CD4-positive, alpha-beta T cell (primary cell): ENCODE measurements at regions of chr5 and their contacts with region 1.

Region 1: DNA sequence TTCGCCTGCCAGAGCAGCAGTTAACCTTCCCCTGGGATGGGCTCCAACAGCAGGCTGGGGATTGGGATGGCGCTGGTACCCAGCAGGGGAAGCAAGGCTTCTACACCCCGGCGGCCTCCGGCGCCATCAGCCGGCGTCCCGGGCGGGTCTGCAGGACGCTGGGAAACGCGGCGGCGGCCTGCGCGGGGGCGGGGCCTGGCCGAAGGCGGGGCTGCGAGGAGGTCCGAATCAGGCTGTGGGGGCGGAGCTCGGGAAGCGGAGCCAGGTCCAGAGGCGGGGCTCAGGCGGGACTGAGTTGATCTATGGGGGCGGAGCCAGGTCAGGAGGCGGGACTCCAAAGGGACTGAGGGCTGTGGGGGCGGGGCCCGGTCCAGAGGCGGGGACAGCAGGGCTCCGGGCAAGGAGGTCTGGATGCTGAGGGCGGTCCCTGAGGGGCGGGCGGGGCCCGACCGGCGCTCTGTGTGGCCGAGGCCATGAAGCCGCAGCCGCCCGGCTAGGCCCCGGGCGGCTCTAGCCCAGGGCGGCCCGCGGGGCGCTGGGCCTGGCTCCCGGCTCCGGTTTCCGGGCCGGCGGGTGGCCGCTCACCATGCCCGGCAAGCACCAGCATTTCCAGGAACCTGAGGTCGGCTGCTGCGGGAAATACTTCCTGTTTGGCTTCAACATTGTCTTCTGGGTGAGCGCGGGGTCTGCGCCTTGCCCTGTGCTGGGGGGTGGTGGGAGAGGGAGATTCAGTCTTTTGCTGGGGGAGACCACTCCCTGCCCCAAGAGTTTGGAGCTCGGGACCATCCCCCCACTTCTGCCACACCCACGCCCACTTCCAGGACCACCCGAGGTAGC is at the start of gene TSPAN17:
- DNase-seq: peak; percentile 91 to 100 (median 98)
- ATAC-seq: peak; percentile 90
- H3K4me3 ChIP-seq: peak within 1 kb of the TSS; percentile 71
- H3K4me3 Mint-ChIP-seq: peak within 1 kb of the TSS; percentile 93
- H3K27ac ChIP-seq: peak within 1 kb of the TSS; percentile 65 to 70
- H3K27ac Mint-ChIP-seq: peak within 1 kb of the TSS; percentile 76
- H3K4me1 ChIP-seq: peaks cover 52% of the 10 kb centered on the region
- H3K4me1 Mint-ChIP-seq: peaks cover 58% of the 10 kb centered on the region
- H3K27me3 ChIP-seq: no peaks in the 10 kb centered on the region
- H3K27me3 Mint-ChIP-seq: no peaks in the 10 kb centered on the region
- CTCF ChIP-seq: no peak
- total RNA-seq, gene TSPAN17: 7.8 to 7.9 TPM

Region 2: DNA sequence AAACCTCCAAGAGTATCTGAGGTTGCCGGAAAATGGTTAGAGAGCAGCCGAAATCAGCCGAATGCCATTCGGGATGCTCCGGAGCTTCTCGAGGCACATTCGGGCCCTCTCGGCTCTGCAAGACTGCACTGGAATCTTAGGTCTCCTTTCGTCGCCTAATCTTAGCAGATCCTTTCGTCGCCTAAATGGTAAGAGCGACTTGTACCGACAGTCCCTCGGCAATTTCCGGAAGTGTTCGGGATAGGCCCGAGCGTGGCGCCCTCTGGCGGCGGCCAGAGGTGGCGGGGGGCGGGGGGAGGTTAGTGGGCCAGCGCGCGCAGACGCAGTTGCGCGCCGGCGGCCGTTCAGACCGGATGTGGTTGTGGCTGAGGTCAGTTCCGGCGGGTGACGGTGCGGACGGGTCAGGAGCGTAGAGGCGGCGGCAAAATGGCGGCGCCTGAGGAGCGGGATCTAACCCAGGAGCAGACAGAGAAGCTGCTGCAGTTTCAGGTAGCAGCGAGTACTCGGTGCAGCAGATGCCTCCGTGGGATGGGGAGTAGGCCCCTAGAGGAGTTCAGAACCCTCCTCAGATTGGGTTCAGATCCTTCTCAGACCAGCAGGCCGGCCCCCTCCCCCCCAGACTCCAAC is 199.2 kb before region 1 on chr5 and contains the start of gene FAF2:
- CTCF ChIA-PET with region 1: interaction called, 5 read pairs
- POLR2A ChIA-PET with region 1: no interaction called
- intact Hi-C with region 1: loop called in 1 of 2 experiments (anchors 5 kb)
- DNase-seq: peak; percentile 94 to 100 (median 98)
- ATAC-seq: peak; percentile 96
- H3K4me3 ChIP-seq: peak within 1 kb of the TSS; percentile 96
- H3K4me3 Mint-ChIP-seq: peak within 1 kb of the TSS; percentile 99
- H3K27ac ChIP-seq: peak within 1 kb of the TSS; percentile 81 to 96
- H3K27ac Mint-ChIP-seq: peak within 1 kb of the TSS; percentile 99
- H3K4me1 ChIP-seq: peaks cover 30% of the 10 kb centered on the region
- H3K4me1 Mint-ChIP-seq: peaks cover 49% of the 10 kb centered on the region
- H3K27me3 ChIP-seq: no peaks in the 10 kb centered on the region
- H3K27me3 Mint-ChIP-seq: no peaks in the 10 kb centered on the region
- CTCF ChIP-seq: peak; percentile 88
- total RNA-seq, gene FAF2: 27.5 to 30.1 TPM

Region 3: GRCh38 chr5:176612008-176612407 is 35.2 kb before region 1 on chr5:
- CTCF ChIA-PET with region 1: interaction called, 5 read pairs
- POLR2A ChIA-PET with region 1: no interaction called
- intact Hi-C with region 1: loop called in 1 of 2 experiments (anchors 2 kb)
- DNase-seq: no peak
- ATAC-seq: no peak
- H3K4me3 ChIP-seq: no peak overlapping the region
- H3K4me3 Mint-ChIP-seq: peak overlapping the region; percentile 26
- H3K27ac ChIP-seq: no peak overlapping the region
- H3K27ac Mint-ChIP-seq: no peak overlapping the region
- H3K4me1 ChIP-seq: peaks cover 15% of the 10 kb centered on the region
- H3K4me1 Mint-ChIP-seq: peaks cover 11% of the 10 kb centered on the region
- H3K27me3 ChIP-seq: peaks cover 18 to 23% of the 10 kb centered on the region in 2 experiments
- H3K27me3 Mint-ChIP-seq: peaks cover 66% of the 10 kb centered on the region
- CTCF ChIP-seq: no peak

Region 4: DNA sequence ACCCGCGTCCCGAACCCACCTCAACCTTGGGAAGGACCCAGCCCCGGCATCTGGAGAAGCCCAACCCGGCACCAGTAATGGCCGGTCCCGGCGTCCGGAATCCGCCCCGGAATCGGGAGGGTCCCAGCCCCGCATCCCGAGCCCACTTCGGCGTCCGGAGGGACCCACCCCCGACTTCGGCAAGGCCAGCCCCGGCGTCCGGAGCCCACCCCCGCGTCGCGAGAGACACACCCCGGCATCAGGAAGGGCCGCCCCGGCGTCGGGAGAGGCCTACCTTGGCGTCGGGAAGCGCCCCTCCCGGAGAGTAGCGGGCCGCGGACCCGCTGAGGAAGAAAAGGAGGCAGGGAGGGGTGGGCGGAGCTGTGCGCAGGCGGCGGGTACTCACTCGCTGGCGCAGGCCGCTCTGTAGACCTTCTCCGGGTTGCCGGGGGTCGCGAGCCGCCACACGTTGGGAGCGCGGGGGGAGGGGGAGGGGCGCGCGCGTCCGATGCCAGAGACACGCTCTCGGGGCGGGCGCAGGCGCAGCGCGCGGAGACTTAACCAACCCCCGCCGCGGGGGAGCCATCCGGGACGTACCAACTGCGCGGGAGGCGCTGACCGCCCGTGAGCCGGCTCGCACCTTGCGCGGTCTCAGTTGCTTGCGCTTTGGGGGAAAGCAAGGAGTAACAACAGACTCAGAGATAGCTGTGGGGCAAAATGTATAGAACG is 359.2 kb after region 1 on chr5 and contains the start of gene UIMC1:
- CTCF ChIA-PET with region 1: no interaction called
- POLR2A ChIA-PET with region 1: no interaction called
- intact Hi-C with region 1: loop called in 1 of 2 experiments (anchors 5 kb)
- DNase-seq: peak; percentile 84 to 96 (median 89)
- ATAC-seq: peak; percentile 83
- H3K4me3 ChIP-seq: peak within 1 kb of the TSS; percentile 91
- H3K4me3 Mint-ChIP-seq: peak within 1 kb of the TSS; percentile 99
- H3K27ac ChIP-seq: peak within 1 kb of the TSS; percentile 70 to 72
- H3K27ac Mint-ChIP-seq: peak within 1 kb of the TSS; percentile 95
- H3K4me1 ChIP-seq: peaks cover 32% of the 10 kb centered on the region
- H3K4me1 Mint-ChIP-seq: peaks cover 35% of the 10 kb centered on the region
- H3K27me3 ChIP-seq: no peaks in the 10 kb centered on the region
- H3K27me3 Mint-ChIP-seq: no peaks in the 10 kb centered on the region
- CTCF ChIP-seq: no peak
- total RNA-seq, gene UIMC1: 42.3 to 50.8 TPM